ENCODE measurements at regions of chr14 and their contacts with region 1.

Region 1: GRCh38 chr14:55707365-55707804 is 127.4 kb downstream of the KTN1 start:
- DNase-seq: peak in 2 of 3 donors; percentile 16 to 22
- H3K4me3 ChIP-seq: no peak overlapping the region
- H3K4me3 Mint-ChIP-seq: no peak overlapping the region
- H3K27ac ChIP-seq: no peak overlapping the region
- H3K27ac Mint-ChIP-seq: peak overlapping the region in 1 of 7 donors; percentile 30
- H3K4me1 ChIP-seq: peaks cover 2 to 3% of the 10 kb centered on the region in 2 donors
- H3K4me1 Mint-ChIP-seq: peaks cover 13% of the 10 kb centered on the region
- H3K27me3 ChIP-seq: no peaks in the 10 kb centered on the region
- H3K27me3 Mint-ChIP-seq: peaks cover 0 to 4% (median 0%) of the 10 kb centered on the region in 3 donors
- CTCF ChIP-seq: peak; percentile 66

Region 2: DNA sequence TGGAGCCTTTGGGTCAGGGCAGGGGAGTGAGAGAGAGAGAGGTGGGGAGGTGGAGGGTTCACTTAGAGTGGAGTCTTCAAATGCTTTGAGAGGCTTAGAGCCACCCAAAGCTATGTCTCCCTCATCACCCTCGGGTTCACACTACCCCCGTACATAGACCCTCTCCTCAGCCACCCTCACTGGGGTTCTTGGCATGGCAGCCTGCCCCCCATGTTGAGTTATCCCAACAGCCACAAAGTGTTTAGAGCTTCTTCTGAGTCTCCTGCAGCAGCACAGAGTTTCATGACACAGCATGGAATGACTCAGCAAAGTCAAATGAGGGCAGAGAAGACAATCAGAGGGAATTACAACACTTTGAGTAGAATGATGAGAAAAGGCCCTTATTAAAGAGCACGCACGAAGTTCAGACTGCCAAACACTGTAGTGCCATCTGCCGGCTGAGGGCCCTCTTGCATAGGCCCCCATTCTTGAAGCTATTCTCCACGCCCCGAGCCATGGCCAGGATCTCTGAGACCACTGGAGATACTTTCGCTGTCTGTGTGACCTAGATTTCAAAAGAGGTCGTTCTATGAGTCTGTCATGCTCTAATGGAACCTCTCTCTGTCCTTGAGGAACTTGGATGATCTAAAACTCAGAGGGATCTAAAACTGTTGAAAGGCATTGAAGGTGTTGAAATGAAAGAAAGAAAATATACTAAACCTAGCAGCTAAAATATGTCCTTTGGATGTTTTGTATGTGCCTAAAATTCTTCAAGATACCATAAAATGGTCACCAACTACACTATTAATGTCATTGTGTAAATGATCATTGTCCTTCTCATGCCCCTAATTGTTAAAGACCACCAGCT is 632.7 kb after region 1 on chr14:
- intact Hi-C with region 1: loop called in 1 of 2 experiments (anchors 10 kb)
- DNase-seq: peak; percentile 85 to 95 (median 91)
- H3K4me3 ChIP-seq: no peak overlapping the region
- H3K4me3 Mint-ChIP-seq: peak overlapping the region; percentile 28 to 54
- H3K27ac ChIP-seq: peak overlapping the region in 1 of 2 donors; percentile 1
- H3K27ac Mint-ChIP-seq: peak overlapping the region; percentile 15 to 89 (median 79)
- H3K4me1 ChIP-seq: peaks cover 13 to 25% of the 10 kb centered on the region in 2 donors
- H3K4me1 Mint-ChIP-seq: peaks cover 26% of the 10 kb centered on the region
- H3K27me3 ChIP-seq: no peaks in the 10 kb centered on the region
- H3K27me3 Mint-ChIP-seq: peaks cover 0 to 4% (median 2%) of the 10 kb centered on the region in 3 donors
- CTCF ChIP-seq: peak; percentile 90

Region 3: GRCh38 chr14:56422703-56423213 is 715.4 kb after region 1 on chr14:
- intact Hi-C with region 1: loop called in 1 of 2 experiments (anchors 5 kb)
- DNase-seq: peak; percentile 15 to 30 (median 20)
- H3K4me3 ChIP-seq: no peak overlapping the region
- H3K4me3 Mint-ChIP-seq: no peak overlapping the region
- H3K27ac ChIP-seq: no peak overlapping the region
- H3K27ac Mint-ChIP-seq: no peak overlapping the region
- H3K4me1 ChIP-seq: no peaks in the 10 kb centered on the region
- H3K4me1 Mint-ChIP-seq: peaks cover 2% of the 10 kb centered on the region
- H3K27me3 ChIP-seq: no peaks in the 10 kb centered on the region
- H3K27me3 Mint-ChIP-seq: peaks cover 2 to 3% (median 2%) of the 10 kb centered on the region in 3 donors
- CTCF ChIP-seq: peak; percentile 56